Calu3 (cell line): ENCODE measurements at regions of chr14 and their contacts with region 1.

Region 1: GRCh38 chr14:72736314-72736715 is 157.6 kb downstream of the DPF3 start:
- DNase-seq: peak; percentile 14
- H3K4me3 Mint-ChIP-seq: no peak overlapping the region
- H3K27ac Mint-ChIP-seq: no peak overlapping the region
- H3K4me1 Mint-ChIP-seq: no peaks in the 10 kb centered on the region
- H3K27me3 Mint-ChIP-seq: peaks cover 19% of the 10 kb centered on the region
- CTCF ChIP-seq: peak; percentile 19

Region 2: GRCh38 chr14:72893636-72894321 is 157.5 kb after region 1 on chr14 and contains the start of gene DPF3:
- CTCF ChIA-PET with region 1: no interaction called
- intact Hi-C with region 1: loop called (anchors 2 kb)
- DNase-seq: peak; percentile 97
- H3K4me3 Mint-ChIP-seq: peak within 1 kb of the TSS; percentile 84
- H3K27ac Mint-ChIP-seq: peak within 1 kb of the TSS; percentile 80
- H3K4me1 Mint-ChIP-seq: no peaks in the 10 kb centered on the region
- H3K27me3 Mint-ChIP-seq: peaks cover 34% of the 10 kb centered on the region
- CTCF ChIP-seq: no peak
- total RNA-seq, gene DPF3: 6.9 and 9.6 TPM in 2 replicates

Region 3: GRCh38 chr14:72904840-72905561 is 168.7 kb after region 1 on chr14:
- CTCF ChIA-PET with region 1: no interaction called
- intact Hi-C with region 1: loop called (anchors 1 kb)
- DNase-seq: peak; percentile 63
- H3K4me3 Mint-ChIP-seq: no peak overlapping the region
- H3K27ac Mint-ChIP-seq: no peak overlapping the region
- H3K4me1 Mint-ChIP-seq: peaks cover 32% of the 10 kb centered on the region
- H3K27me3 Mint-ChIP-seq: no peaks in the 10 kb centered on the region
- CTCF ChIP-seq: peak; percentile 60